Activated B cell treated with CpG ODN at 0.5 μM for 24 hours (primary cell): ENCODE measurements at regions of chr16 and their contacts with region 1.

Region 1: GRCh38 chr16:84144859-84145639 is at the starts of genes DNAAF1 and HSDL1:
- DNase-seq: peak; percentile 97
- ATAC-seq: peak; percentile 86
- H3K4me3 Mint-ChIP-seq: peak within 1 kb of the TSS; percentile 93
- H3K27ac Mint-ChIP-seq: peak within 1 kb of the TSS; percentile 77
- H3K4me1 Mint-ChIP-seq: peaks cover 12% of the 10 kb centered on the region
- H3K27me3 Mint-ChIP-seq: peaks cover 3% of the 10 kb centered on the region
- CTCF ChIP-seq: no peak
- total RNA-seq, gene DNAAF1: not detected in 2 replicates
- total RNA-seq, gene HSDL1: 13.1 and 15.3 TPM in 2 replicates

Region 2: DNA sequence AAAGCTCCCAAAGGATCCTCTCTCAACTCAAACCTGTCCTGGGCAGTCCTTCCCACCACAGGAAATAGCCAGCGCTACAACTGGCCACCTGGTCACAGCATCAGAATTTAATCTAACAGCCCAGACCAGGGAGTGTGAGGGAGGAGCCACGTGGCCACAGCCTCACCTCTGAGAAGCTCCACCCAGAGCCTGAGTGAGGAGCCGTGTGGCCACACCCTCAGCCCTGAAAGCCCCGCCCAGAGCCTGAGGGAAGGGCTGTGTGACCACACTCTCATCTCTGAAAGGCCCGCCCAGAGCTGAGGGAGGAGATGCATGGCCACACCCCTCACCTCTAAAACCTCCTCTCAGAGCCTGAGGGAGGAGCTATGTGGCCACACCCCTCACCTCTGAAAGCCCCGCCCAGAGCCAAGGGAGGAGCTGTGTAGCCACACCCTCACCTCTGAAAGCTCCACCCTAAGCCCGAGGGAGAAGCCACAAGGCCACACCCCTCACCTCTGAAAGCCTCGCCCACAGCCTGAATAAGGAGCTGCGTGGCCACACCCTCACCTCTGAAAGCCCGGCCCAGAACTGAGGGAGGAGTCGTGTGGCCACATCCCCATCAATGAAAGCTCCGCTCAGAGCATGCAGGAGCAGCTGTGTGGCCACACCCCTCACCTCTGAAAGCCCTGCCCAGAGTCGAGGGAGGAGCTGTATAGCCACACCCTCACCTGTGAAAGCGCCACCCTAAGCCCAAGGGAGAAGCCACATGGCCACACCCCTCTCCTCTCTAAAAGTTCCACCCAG is 131.1 kb before region 1 on chr16:
- CTCF ChIA-PET with region 1: no interaction called
- POLR2A ChIA-PET with region 1: no interaction called
- intact Hi-C with region 1: loop called (anchors 5 kb)
- DNase-seq: no peak
- ATAC-seq: peak; percentile 75
- H3K4me3 Mint-ChIP-seq: no peak overlapping the region
- H3K27ac Mint-ChIP-seq: no peak overlapping the region
- H3K4me1 Mint-ChIP-seq: peaks cover 8% of the 10 kb centered on the region
- H3K27me3 Mint-ChIP-seq: no peaks in the 10 kb centered on the region
- CTCF ChIP-seq: no peak

Region 3: DNA sequence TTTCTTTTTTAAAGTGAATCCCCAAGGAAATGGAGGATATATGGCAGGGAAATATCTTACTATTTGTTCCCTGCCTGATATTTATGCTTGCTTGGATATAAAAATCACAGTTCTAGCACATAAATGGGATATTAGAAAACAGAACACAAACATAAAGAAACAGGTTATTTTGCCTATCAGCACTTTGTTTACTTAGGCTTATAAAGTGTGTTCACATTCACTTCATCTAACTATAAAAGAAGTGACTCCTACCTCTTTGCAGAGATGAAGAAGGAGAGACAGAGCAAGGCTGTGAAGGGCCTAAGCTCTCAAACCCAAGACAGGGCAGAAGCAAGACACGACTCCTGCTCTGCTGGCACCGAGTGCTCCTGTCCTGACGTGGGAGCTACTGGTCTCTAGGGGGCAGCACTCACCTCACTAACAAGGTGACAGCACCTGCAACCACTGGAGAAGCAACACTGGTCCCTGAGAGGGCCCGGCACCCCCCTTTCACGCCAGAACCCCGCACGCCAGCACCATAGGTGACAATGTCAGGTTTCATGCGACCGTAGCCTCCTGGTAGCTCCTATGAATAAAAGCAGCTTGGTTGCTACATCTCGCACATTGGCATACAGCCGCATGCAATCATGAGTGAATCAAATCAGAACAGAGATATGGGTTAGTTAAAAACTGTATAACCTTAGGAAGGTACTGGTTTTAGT is 60.3 kb before region 1 on chr16:
- CTCF ChIA-PET with region 1: interaction called, 3 read pairs
- POLR2A ChIA-PET with region 1: interaction called, 4 read pairs
- intact Hi-C with region 1: loop called (anchors 1 kb)
- DNase-seq: peak; percentile 28
- ATAC-seq: peak; percentile 65
- H3K4me3 Mint-ChIP-seq: no peak overlapping the region
- H3K27ac Mint-ChIP-seq: no peak overlapping the region
- H3K4me1 Mint-ChIP-seq: peaks cover 45% of the 10 kb centered on the region
- H3K27me3 Mint-ChIP-seq: no peaks in the 10 kb centered on the region
- CTCF ChIP-seq: no peak

Region 4: GRCh38 chr16:84116720-84117493 is 28.1 kb before region 1 on chr16 and contains the start of gene MBTPS1:
- CTCF ChIA-PET with region 1: interaction called, 7 read pairs
- POLR2A ChIA-PET with region 1: interaction called, 47 read pairs
- intact Hi-C with region 1: loop called (anchors 1 kb)
- DNase-seq: peak; percentile 99
- ATAC-seq: peak; percentile 91
- H3K4me3 Mint-ChIP-seq: peak within 1 kb of the TSS; percentile 92
- H3K27ac Mint-ChIP-seq: peak within 1 kb of the TSS; percentile 89
- H3K4me1 Mint-ChIP-seq: peaks cover 25% of the 10 kb centered on the region
- H3K27me3 Mint-ChIP-seq: no peaks in the 10 kb centered on the region
- CTCF ChIP-seq: no peak
- total RNA-seq, gene MBTPS1: 74.1 and 79.2 TPM in 2 replicates

Region 5: DNA sequence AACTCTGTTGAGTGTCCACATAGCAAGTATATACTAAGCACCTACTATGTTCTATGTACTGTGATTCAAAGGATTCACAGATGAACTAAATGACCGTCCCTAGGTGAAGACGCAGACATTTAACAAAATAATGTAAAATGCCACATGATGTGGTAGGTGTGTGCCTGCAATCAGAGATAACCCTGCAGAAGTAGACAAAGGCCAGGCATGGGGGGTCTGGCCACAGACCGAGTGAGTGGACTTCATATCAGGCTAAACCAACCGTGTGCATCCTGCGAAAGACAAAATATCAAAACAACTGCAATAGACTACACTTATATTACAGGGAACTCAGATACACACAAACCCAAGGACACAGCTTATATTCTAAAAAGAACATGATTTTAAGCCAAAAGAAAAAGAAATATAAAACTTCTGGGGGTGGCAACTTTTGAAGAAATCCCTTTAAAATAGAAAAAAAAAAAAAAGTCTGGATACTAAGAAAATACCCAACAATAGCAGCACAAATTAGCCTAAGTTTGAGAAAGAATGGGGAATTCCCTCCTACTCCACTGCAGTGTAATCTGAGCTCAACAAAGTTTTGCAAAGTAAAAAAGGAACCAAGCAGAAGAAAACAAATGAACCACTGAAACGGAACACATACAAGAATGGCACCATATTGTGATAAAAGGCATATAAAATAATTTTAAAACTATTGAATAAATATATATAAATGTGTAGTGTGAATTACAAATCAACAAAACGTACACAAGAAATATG is 12.3 kb before region 1 on chr16:
- CTCF ChIA-PET with region 1: no interaction called
- POLR2A ChIA-PET with region 1: interaction called, 4 read pairs
- intact Hi-C with region 1: loop called (anchors 1 kb)
- DNase-seq: no peak
- ATAC-seq: peak; percentile 77
- H3K4me3 Mint-ChIP-seq: no peak overlapping the region
- H3K27ac Mint-ChIP-seq: peak overlapping the region; percentile 53
- H3K4me1 Mint-ChIP-seq: peaks cover 29% of the 10 kb centered on the region
- H3K27me3 Mint-ChIP-seq: no peaks in the 10 kb centered on the region
- CTCF ChIP-seq: no peak

Region 6: GRCh38 chr16:84449171-84450140 is 304.4 kb after region 1 on chr16:
- CTCF ChIA-PET with region 1: no interaction called
- POLR2A ChIA-PET with region 1: no interaction called
- intact Hi-C with region 1: no loop called
- DNase-seq: no peak
- ATAC-seq: no peak
- H3K4me3 Mint-ChIP-seq: no peak overlapping the region
- H3K27ac Mint-ChIP-seq: no peak overlapping the region
- H3K4me1 Mint-ChIP-seq: no peaks in the 10 kb centered on the region
- H3K27me3 Mint-ChIP-seq: peaks cover 7% of the 10 kb centered on the region
- CTCF ChIP-seq: no peak